ENCODE measurements at regions of chr21 and their contacts with region 1.

Region 1: GRCh38 chr21:31457675-31458074 is 113.6 kb upstream of the TIAM1 start:
- DNase-seq: no peak
- H3K4me3 ChIP-seq: no peak overlapping the region
- H3K27ac ChIP-seq: no peak overlapping the region; the same call in 1 of the 2 replicates
- H3K4me1 ChIP-seq: no peaks in the 10 kb centered on the region
- H3K27me3 ChIP-seq: no peaks in the 10 kb centered on the region
- CTCF ChIP-seq: peak; percentile 50 to 94 (median 70)
- EP300 ChIP-seq: no peak
- POLR2A ChIP-seq: no peak
- RAD21 ChIP-seq: peak; percentile 38 to 69

Region 2: DNA sequence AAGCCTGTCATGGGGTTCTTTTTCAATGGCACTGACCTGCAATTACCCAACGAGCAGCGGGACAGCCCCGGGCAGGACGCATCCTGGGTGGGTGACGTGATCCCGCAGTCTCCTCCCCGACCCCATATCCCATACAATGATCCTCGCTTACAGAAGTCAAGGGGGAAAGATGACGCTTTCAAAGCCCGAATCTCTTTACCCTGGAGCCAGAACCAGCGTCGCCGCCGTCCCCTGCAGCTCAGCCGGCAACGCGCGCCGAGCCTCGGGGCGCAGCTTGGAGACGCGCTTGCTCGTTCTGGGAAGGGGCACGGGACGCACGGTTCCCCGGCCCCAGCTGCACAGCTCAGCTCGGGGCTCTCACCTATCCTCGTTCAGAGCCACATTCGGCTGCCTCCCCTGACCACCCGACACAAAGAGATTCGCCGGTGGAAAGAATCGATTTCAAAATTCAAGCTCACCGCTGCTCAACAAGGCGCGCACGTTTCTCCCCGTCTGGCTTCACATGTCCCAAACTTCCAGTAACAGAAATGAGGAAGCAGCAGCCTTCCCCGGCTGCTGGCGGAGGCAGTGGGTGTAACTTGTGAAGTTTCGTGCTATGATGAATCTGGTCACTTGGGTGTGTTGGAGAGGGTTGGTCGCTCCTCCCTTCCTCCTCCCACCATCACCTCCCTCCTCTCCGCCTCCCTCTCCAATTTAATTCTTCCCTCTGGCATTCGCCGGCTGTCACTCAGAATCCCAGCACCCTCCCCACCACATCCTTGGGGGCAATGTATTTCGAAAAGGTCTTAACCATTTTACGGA is 113.8 kb before region 1 on chr21 and contains the start of gene TIAM1:
- CTCF ChIA-PET with region 1: interaction called, 10 read pairs
- POLR2A ChIA-PET with region 1: no interaction called
- DNase-seq: peak; percentile 38 to 70
- H3K4me3 ChIP-seq: peak within 1 kb of the TSS; percentile 68 to 80 (median 73)
- H3K27ac ChIP-seq: peak within 1 kb of the TSS; percentile 41; the same call in 1 of the 2 replicates
- H3K4me1 ChIP-seq: peaks cover 0 to 9% (median 3%) of the 10 kb centered on the region in 4 experiments; a peak in 3 of 7 replicates
- H3K27me3 ChIP-seq: peaks cover 0 to 2% (median 0%) of the 10 kb centered on the region in 4 experiments; a peak in 1 of 7 replicates
- CTCF ChIP-seq: no peak; a peak in 1 of 4 replicates
- EP300 ChIP-seq: no peak
- POLR2A ChIP-seq: peak; percentile 43 to 75
- RAD21 ChIP-seq: no peak; a peak in 1 of 4 replicates
- total RNA-seq, gene TIAM1: 28.4 and 30.7 TPM in 2 replicates

Region 3: DNA sequence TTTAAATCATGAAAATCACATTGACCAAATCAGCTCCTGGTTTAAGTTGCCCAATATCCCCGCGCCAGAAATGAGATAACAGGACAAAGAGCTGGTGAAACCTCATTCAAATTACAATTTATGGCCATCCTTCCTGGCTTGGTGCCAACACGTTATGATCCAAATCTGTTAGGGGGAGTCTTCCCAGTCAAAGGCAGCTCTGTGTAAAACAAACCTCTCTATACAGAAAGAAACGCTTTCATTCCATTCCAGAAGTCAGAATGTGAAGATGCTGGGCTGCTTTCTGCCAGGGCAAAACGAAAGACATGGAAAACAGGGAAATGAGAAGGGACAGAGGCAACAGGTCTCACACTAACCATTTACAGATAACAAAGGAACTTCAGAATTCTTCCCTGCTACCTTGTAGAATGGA is 60.2 kb before region 1 on chr21:
- CTCF ChIA-PET with region 1: no interaction called
- POLR2A ChIA-PET with region 1: no interaction called
- DNase-seq: no peak
- H3K4me3 ChIP-seq: no peak overlapping the region
- H3K27ac ChIP-seq: no peak overlapping the region
- H3K4me1 ChIP-seq: peaks cover 0 to 5% (median 1%) of the 10 kb centered on the region in 4 experiments; a peak in 2 of 7 replicates
- H3K27me3 ChIP-seq: no peaks in the 10 kb centered on the region
- CTCF ChIP-seq: no peak
- EP300 ChIP-seq: no peak
- POLR2A ChIP-seq: no peak
- RAD21 ChIP-seq: no peak

Region 4: GRCh38 chr21:31443736-31444521 is 13.7 kb before region 1 on chr21:
- CTCF ChIA-PET with region 1: interaction called, 17 read pairs
- POLR2A ChIA-PET with region 1: no interaction called
- DNase-seq: no peak
- H3K4me3 ChIP-seq: no peak overlapping the region
- H3K27ac ChIP-seq: no peak overlapping the region
- H3K4me1 ChIP-seq: no peaks in the 10 kb centered on the region; a peak in 1 of 7 replicates
- H3K27me3 ChIP-seq: no peaks in the 10 kb centered on the region
- CTCF ChIP-seq: no peak
- EP300 ChIP-seq: no peak
- POLR2A ChIP-seq: no peak
- RAD21 ChIP-seq: no peak

Region 5: GRCh38 chr21:31470896-31471694 is 13.4 kb after region 1 on chr21:
- CTCF ChIA-PET with region 1: interaction called, 41 read pairs
- POLR2A ChIA-PET with region 1: no interaction called
- DNase-seq: no peak
- H3K4me3 ChIP-seq: 0 out of 8 replicates have a peak overlapping the region, but pooled peaks of 1 of the 4 experiments have one; percentile 8
- H3K27ac ChIP-seq: no peak overlapping the region
- H3K4me1 ChIP-seq: peaks cover 0 to 7% (median 5%) of the 10 kb centered on the region in 4 experiments; a peak in 6 of 7 replicates
- H3K27me3 ChIP-seq: no peaks in the 10 kb centered on the region
- CTCF ChIP-seq: no peak
- EP300 ChIP-seq: no peak
- POLR2A ChIP-seq: no peak
- RAD21 ChIP-seq: no peak

Region 6: DNA sequence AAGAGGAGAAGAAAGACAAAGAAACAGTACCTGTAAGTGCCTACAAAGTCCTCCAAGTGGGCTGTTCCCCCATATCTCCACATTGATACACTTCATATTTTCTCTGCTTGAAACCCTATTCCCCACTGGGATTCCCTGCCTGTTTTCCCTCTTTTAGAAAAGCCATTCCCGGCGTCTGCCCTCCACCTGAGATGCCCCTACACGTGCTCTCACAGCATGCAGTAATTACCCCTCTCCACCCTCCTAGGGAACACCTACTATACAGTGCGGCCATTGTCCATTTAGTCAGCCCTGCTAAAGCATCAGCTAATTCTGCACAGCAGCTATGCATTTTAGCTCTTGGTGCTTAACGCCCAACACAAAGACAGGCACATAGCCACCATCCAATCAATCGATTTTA is 22.0 kb after region 1 on chr21:
- CTCF ChIA-PET with region 1: interaction called, 12 read pairs
- POLR2A ChIA-PET with region 1: no interaction called
- DNase-seq: no peak
- H3K4me3 ChIP-seq: no peak overlapping the region
- H3K27ac ChIP-seq: no peak overlapping the region
- H3K4me1 ChIP-seq: peaks cover 0 to 7% (median 2%) of the 10 kb centered on the region in 4 experiments; a peak in 2 of 7 replicates
- H3K27me3 ChIP-seq: no peaks in the 10 kb centered on the region
- CTCF ChIP-seq: no peak
- EP300 ChIP-seq: no peak
- POLR2A ChIP-seq: no peak
- RAD21 ChIP-seq: no peak

Measured in H1 (cell line).